ENCODE measurements at regions of chr17 and their contacts with region 1.

Region 1: DNA sequence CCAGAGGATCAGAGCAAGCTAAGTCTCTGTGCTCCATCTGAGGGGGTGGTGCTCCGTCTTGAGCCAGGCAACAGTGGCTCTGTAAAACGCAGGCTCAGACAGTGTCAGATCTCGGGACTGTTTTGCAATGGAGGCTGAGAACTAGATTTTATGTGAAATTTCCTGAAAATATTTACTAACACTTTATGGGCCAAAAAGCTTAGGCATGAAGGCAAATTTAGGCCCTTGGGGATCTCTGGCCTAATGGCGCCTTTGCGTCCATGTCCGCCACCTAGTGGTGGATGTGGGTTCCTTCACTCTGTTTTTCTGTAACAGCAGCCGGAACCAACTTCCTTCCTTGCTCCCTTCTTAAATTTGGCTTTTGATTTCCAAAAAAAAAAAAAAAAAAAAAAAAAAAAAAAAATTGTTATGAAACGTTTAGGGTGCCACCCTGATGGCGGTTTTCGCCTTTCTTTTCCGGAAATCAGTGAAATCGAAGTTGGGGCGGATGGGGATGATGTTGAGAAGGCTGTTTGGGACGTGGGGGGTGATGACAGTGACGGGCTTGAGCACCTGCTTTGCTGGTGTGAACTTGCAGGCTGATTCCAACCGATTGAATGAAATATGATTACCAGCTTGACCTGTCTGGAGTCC is 14.0 kb upstream of the ELAC2 start:
- DNase-seq: peak; percentile 52 to 71
- ATAC-seq: peak; percentile 67 to 87; a peak in 4 of 6 replicates
- H3K4me3 ChIP-seq: no peak overlapping the region
- H3K27ac ChIP-seq: no peak overlapping the region
- H3K4me1 ChIP-seq: no peaks in the 10 kb centered on the region
- CTCF ChIP-seq: peak; percentile 69
- EP300 ChIP-seq: no peak
- POLR2A ChIP-seq: no peak
- RAD21 ChIP-seq: peak in 1 of 2 experiments; percentile 26; a peak in 1 of 5 replicates

Region 2: GRCh38 chr17:13010959-13011358 is 20.9 kb before region 1 on chr17:
- CTCF ChIA-PET with region 1: interaction called, 58 read pairs
- POLR2A ChIA-PET with region 1: no interaction called
- DNase-seq: no peak
- ATAC-seq: no peak
- H3K4me3 ChIP-seq: no peak overlapping the region
- H3K27ac ChIP-seq: no peak overlapping the region
- H3K4me1 ChIP-seq: peaks cover under 1% of the 10 kb centered on the region; the same call in 1 of the 3 replicates
- CTCF ChIP-seq: no peak
- EP300 ChIP-seq: no peak
- POLR2A ChIP-seq: no peak
- RAD21 ChIP-seq: no peak

Region 3: DNA sequence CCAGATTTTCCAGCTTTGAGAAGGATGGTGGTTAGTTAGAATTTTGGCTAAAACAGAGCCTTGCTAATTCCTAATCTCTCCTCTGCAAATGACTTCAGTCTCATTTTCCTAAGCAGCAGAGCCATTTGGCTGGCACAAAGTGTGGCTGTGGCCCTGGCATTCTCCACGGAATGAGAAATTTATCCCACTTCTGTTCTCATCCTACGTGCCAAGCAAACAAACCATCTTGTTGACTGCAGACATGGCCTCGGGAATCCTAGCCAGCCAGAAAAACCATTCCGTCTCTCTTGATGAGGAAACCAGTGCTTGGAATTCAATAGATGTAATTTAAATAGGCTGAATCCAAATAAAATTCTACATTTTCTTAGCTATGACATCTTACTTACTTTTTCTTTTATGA is 20.1 kb after region 1 on chr17:
- CTCF ChIA-PET with region 1: interaction called, 51 read pairs
- POLR2A ChIA-PET with region 1: no interaction called
- DNase-seq: no peak
- ATAC-seq: no peak
- H3K4me3 ChIP-seq: no peak overlapping the region
- H3K27ac ChIP-seq: no peak overlapping the region
- H3K4me1 ChIP-seq: no peaks in the 10 kb centered on the region
- CTCF ChIP-seq: no peak
- EP300 ChIP-seq: no peak
- POLR2A ChIP-seq: no peak
- RAD21 ChIP-seq: no peak

Region 4: DNA sequence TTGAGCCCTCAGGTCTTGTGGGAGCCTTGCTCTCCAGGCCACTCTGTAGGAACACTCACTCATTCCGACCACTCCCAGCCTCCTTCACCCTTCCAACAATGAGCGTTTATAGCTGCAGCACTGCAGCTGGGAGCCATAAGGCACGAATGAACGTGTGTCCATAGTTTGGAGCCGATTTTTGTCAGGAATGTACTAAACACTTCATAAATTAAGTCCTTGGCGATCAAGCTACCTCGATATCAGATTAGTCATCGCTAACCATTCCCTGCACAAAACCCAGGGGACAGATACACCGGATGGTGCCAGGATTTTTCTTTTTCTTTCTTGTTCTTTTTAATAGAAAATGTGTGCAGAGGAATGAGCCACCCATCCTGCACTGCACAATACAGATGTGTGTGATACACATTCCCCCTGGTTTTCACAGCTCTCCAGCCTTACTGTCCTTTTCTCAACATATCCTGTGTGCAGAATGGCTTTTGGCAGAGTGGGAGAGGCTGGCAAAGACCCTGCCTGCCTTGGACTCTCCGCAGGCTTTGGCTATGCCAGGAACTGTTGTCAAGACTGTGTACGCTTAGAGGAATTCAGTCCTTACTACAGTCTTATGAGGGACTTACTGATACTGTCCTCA is 54.4 kb after region 1 on chr17:
- CTCF ChIA-PET with region 1: interaction called, 12 read pairs
- POLR2A ChIA-PET with region 1: no interaction called
- DNase-seq: no peak
- ATAC-seq: no peak
- H3K4me3 ChIP-seq: no peak overlapping the region
- H3K27ac ChIP-seq: no peak overlapping the region
- H3K4me1 ChIP-seq: no peaks in the 10 kb centered on the region
- CTCF ChIP-seq: no peak
- EP300 ChIP-seq: no peak
- POLR2A ChIP-seq: no peak
- RAD21 ChIP-seq: no peak

Region 5: GRCh38 chr17:13272296-13272695 is 240.5 kb after region 1 on chr17:
- CTCF ChIA-PET with region 1: no interaction called
- POLR2A ChIA-PET with region 1: no interaction called
- DNase-seq: no peak
- ATAC-seq: no peak
- H3K4me3 ChIP-seq: no peak overlapping the region
- H3K27ac ChIP-seq: no peak overlapping the region
- H3K4me1 ChIP-seq: no peaks in the 10 kb centered on the region
- CTCF ChIP-seq: no peak
- EP300 ChIP-seq: no peak
- POLR2A ChIP-seq: no peak
- RAD21 ChIP-seq: no peak

Region 6: GRCh38 chr17:13297183-13297582 is 265.3 kb after region 1 on chr17:
- CTCF ChIA-PET with region 1: no interaction called
- POLR2A ChIA-PET with region 1: no interaction called
- DNase-seq: no peak
- ATAC-seq: no peak
- H3K4me3 ChIP-seq: no peak overlapping the region
- H3K27ac ChIP-seq: no peak overlapping the region
- H3K4me1 ChIP-seq: no peaks in the 10 kb centered on the region
- CTCF ChIP-seq: no peak
- EP300 ChIP-seq: no peak
- POLR2A ChIP-seq: no peak
- RAD21 ChIP-seq: no peak

Region 7: DNA sequence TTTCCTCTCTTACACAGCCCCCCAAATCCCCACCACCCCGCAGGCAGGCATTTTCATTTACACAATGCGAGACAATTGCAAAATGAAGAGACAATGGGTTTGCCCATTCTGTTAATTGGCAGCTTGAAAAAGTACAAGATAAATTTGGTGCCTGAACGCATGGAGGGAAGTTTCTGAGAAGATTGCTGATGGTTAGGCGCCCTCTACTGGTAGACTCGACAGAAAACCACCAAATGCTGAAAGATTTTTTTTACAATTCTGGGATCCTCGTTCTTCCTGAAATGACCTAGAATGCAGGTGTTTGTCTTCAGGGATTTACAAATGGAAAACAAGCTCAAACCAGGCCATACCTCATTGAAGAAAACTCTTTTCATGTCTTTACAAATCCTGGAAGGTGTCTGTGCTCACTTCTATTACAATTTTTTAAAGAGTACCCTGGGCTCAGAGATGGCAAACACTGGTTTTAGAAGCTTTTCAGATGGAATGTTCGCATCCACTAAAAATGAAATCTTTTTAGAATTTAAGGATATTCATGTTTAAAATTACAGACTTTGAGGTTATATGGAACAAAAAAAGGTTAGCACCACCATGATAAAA is 1894.8 kb after region 1 on chr17:
- CTCF ChIA-PET with region 1: interaction called, 17 read pairs
- POLR2A ChIA-PET with region 1: no interaction called
- DNase-seq: peak; percentile 36 to 75
- ATAC-seq: peak; percentile 68 to 71; a peak in 4 of 6 replicates
- H3K4me3 ChIP-seq: no peak overlapping the region
- H3K27ac ChIP-seq: peak overlapping the region in 1 of 2 experiments; percentile 20; a peak in 1 of 6 replicates
- H3K4me1 ChIP-seq: peaks cover 8% of the 10 kb centered on the region; the same call in 1 of the 3 replicates
- CTCF ChIP-seq: peak; percentile 95
- EP300 ChIP-seq: no peak
- POLR2A ChIP-seq: no peak
- RAD21 ChIP-seq: peak; percentile 97

Measured in A549 (cell line).